Heart right ventricle (tissue), 16 donors: ENCODE measurements at regions of chr1 and their contacts with region 1.

Region 1: DNA sequence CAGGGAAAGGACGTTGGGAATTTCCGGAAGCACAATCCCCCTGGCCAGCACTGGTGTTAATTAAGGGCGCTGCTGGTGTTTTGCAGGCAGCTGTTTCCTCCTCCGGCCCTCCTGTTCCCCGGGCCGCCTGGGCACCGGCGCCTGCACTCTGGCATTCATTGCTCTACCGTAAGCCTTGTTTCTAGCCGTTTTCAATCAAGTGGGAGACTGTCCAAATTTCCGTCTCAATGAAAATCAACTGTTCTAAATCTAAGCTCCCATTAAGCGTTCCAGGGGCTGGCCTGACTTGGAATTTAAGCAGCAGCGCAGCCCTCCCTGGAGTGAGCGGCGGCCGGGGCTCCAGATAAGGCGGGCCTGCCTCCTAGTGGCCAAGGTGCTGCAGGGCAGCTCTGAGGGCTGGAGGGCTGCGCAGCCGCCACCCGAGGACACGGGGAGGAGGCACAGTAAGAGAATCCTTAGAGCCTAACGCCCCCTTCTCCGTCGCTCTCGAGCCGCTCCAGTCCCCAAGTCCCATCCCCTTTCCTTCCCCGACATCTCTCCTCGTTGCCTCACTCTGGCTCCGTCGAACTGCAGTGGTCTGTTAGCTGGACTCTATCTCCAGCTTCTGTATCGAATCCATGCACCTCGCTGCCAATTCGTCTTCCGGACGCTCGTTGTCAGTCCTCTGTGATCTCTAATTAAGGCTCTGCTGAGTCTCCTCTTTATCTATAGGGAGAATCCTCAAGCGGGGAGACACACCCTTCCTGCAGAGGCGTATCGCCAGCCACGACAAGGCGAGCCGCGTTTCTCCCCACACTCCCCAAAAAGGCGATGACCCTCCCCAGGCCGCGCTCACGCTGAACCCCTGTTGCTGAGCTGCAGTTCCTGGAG is 57.8 kb upstream of the LRRC8D start:
- DNase-seq: peak; percentile 88 to 90
- ATAC-seq: peak; percentile 94 to 99 (median 98)
- H3K4me3 ChIP-seq: peak overlapping the region; percentile 11 to 60 (median 54)
- H3K27ac ChIP-seq: peak overlapping the region; percentile 6 to 82 (median 72)
- H3K4me1 ChIP-seq: peaks cover 8 to 60% (median 51%) of the 10 kb centered on the region in 9 donors
- H3K27me3 ChIP-seq: no peaks in the 10 kb centered on the region
- CTCF ChIP-seq: peak; percentile 91 to 100 (median 99)

Region 2: GRCh38 chr1:88998716-88999115 is 764.3 kb before region 1 on chr1:
- intact Hi-C with region 1: loop called in 1 of 10 experiments (anchors 10 kb)
- DNase-seq: peak in 1 of 2 donors; percentile 30
- ATAC-seq: peak; percentile 73 to 92 (median 85)
- H3K4me3 ChIP-seq: no peak overlapping the region
- H3K27ac ChIP-seq: no peak overlapping the region
- H3K4me1 ChIP-seq: peaks cover 0 to 12% (median 2%) of the 10 kb centered on the region in 9 donors
- H3K27me3 ChIP-seq: no peaks in the 10 kb centered on the region
- CTCF ChIP-seq: peak; percentile 51 to 72 (median 62)

Region 3: GRCh38 chr1:89331890-89332289 is 431.1 kb before region 1 on chr1:
- intact Hi-C with region 1: no loop called
- DNase-seq: no peak
- ATAC-seq: no peak
- H3K4me3 ChIP-seq: no peak overlapping the region
- H3K27ac ChIP-seq: no peak overlapping the region
- H3K4me1 ChIP-seq: peaks cover 0 to 5% (median 0%) of the 10 kb centered on the region in 9 donors
- H3K27me3 ChIP-seq: no peaks in the 10 kb centered on the region
- CTCF ChIP-seq: no peak

Region 4: DNA sequence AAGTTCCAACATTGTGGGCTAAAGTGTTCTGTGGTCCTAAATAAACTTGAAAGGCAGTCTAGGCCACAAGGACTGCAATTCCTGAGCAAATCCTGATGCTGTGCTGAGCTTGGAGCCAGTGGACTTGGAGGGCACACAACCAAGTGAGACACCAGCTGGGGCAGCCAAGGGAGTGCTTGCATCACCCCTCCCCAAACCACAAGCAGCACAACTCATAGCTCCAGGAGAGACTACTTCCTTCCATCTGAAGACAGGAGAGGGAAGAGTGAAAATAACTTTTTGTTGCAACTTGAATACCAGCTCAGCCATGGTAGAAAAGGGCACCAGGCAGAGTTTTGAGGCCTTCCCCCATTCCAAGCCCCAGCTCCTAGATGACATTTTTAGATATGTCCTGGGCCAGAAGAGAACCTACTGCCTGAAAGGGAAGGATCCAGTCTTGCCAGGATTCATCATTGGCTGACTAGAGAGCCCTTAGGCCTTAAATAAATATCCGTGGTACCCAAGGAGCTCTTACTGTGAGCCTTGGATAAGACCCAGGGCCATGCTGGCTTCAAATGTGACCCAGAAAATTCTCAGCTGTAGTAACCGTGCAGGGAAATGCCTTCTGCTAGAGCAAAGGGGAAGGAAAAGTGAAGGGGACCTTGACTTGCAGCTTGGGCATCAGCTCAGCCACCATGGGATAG is 273.8 kb before region 1 on chr1:
- intact Hi-C with region 1: loop called in 4 of 10 experiments (anchors 5 kb)
- DNase-seq: no peak
- ATAC-seq: no peak
- H3K4me3 ChIP-seq: no peak overlapping the region
- H3K27ac ChIP-seq: no peak overlapping the region
- H3K4me1 ChIP-seq: peaks cover 0 to 10% (median 0%) of the 10 kb centered on the region in 9 donors
- H3K27me3 ChIP-seq: no peaks in the 10 kb centered on the region
- CTCF ChIP-seq: no peak

Region 5: GRCh38 chr1:89598450-89599331 is 164.3 kb before region 1 on chr1:
- intact Hi-C with region 1: loop called in 5 of 10 experiments (anchors 2 to 10 kb)
- DNase-seq: no peak
- ATAC-seq: peak in 5 of 8 donors; percentile 51 to 77 (median 74)
- H3K4me3 ChIP-seq: no peak overlapping the region
- H3K27ac ChIP-seq: no peak overlapping the region
- H3K4me1 ChIP-seq: peaks cover 0 to 19% (median 13%) of the 10 kb centered on the region in 9 donors
- H3K27me3 ChIP-seq: no peaks in the 10 kb centered on the region
- CTCF ChIP-seq: peak; percentile 43 to 81 (median 71)

Region 6: GRCh38 chr1:89632657-89633247 is 130.3 kb before region 1 on chr1 and contains the start of gene LRRC8C:
- intact Hi-C with region 1: loop called (anchors 1 to 10 kb)
- DNase-seq: peak; percentile 88 to 92
- ATAC-seq: peak; percentile 88 to 96 (median 94)
- H3K4me3 ChIP-seq: peak within 1 kb of the TSS; percentile 57 to 99 (median 96)
- H3K27ac ChIP-seq: peak within 1 kb of the TSS; percentile 93 to 99 (median 98)
- H3K4me1 ChIP-seq: peaks cover 10 to 77% (median 57%) of the 10 kb centered on the region in 9 donors
- H3K27me3 ChIP-seq: no peaks in the 10 kb centered on the region
- CTCF ChIP-seq: peak; percentile 29 to 84 (median 65)
- total RNA-seq, gene LRRC8C: 5.6 to 12.3 (median 8.3) TPM

Region 7: DNA sequence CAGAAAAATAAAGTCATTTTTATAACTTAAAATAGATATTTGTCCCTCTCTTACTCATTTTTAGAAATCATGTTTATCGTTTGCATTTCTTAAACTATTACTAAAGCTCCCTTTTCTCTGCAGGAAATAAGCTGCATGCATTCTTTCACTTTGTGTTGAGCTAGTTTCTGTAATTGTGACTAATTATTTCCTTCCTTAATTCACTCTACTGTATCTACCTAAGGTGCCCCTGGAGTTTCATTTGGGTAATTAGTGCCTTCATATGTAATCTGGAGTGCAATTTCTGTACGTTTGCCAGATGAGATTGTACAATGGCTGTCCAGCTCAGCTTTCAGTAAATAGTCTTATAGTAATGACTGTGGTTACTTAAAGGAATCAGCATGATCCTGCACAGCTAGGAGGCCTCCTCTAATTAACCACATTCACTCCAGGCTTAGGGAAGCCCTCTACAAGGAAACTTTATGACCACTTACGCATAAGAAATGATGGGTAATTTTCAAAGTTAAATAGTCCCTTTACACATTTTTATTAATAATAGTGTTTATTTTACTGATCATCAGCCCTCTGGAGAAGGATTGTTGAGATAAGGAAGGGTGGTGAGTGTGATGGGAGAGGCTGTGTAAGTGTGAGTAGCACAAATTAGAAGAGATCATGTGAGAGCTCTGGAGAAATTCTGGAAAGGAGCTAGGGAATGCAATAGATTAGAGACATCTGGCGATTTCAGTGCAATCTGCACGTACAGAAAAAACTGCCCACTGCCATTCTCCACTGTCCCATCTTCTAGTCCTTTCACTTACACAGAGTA is 43.3 kb before region 1 on chr1:
- intact Hi-C with region 1: loop called in 5 of 10 experiments (anchors 5 kb)
- DNase-seq: no peak
- ATAC-seq: peak in 2 of 8 donors; percentile 14 to 37
- H3K4me3 ChIP-seq: peak overlapping the region in 1 of 10 donors; percentile 5
- H3K27ac ChIP-seq: peak overlapping the region in 7 of 10 donors; percentile 18 to 86 (median 54)
- H3K4me1 ChIP-seq: peaks cover 9 to 68% (median 44%) of the 10 kb centered on the region in 9 donors
- H3K27me3 ChIP-seq: no peaks in the 10 kb centered on the region
- CTCF ChIP-seq: no peak